OCI-LY7 (cell line): ENCODE measurements at regions of chr9 and their contacts with region 1.

Region 1: GRCh38 chr9:129383561-129384416 is 205.7 kb upstream of the IER5L start:
- DNase-seq: peak; percentile 83
- H3K4me3 ChIP-seq: peak overlapping the region; percentile 56
- H3K27ac ChIP-seq: no peak overlapping the region
- H3K4me1 ChIP-seq: peaks cover 21% of the 10 kb centered on the region
- CTCF ChIP-seq: peak; percentile 24

Region 2: DNA sequence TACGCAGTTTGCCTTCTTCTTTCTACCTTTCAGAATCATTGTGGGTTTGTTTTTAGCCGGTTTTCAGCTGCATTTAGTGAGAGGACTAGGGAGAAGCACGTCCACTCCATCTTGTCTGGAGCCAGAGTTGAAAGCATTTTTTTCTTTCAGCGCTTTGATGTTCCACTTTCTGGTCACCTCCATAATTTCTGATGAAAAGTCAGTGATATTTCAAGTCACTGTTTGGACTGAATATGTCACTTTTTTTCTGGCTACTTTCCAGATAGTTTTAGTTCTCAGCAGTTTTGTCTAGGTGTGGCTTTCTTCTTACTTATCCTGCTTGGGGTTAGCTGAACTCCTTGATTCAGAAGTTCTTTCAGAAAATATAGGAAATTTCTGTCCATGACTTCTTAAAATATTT is 81.8 kb before region 1 on chr9:
- CTCF ChIA-PET with region 1: no interaction called
- POLR2A ChIA-PET with region 1: no interaction called
- intact Hi-C with region 1: no loop called
- DNase-seq: no peak
- H3K4me3 ChIP-seq: no peak overlapping the region
- H3K27ac ChIP-seq: no peak overlapping the region
- H3K4me1 ChIP-seq: no peaks in the 10 kb centered on the region
- CTCF ChIP-seq: no peak

Region 3: GRCh38 chr9:129320575-129321263 is 63.1 kb before region 1 on chr9:
- CTCF ChIA-PET with region 1: no interaction called
- POLR2A ChIA-PET with region 1: no interaction called
- intact Hi-C with region 1: no loop called
- DNase-seq: no peak
- H3K4me3 ChIP-seq: no peak overlapping the region
- H3K27ac ChIP-seq: no peak overlapping the region
- H3K4me1 ChIP-seq: peaks cover 10% of the 10 kb centered on the region
- CTCF ChIP-seq: no peak

Region 4: GRCh38 chr9:129413537-129414376 is 30.0 kb after region 1 on chr9:
- CTCF ChIA-PET with region 1: no interaction called
- POLR2A ChIA-PET with region 1: no interaction called
- intact Hi-C with region 1: loop called (anchors 1 kb)
- DNase-seq: peak; percentile 98
- H3K4me3 ChIP-seq: peak overlapping the region; percentile 71
- H3K27ac ChIP-seq: peak overlapping the region; percentile 91
- H3K4me1 ChIP-seq: peaks cover 54% of the 10 kb centered on the region
- CTCF ChIP-seq: no peak

Region 5: DNA sequence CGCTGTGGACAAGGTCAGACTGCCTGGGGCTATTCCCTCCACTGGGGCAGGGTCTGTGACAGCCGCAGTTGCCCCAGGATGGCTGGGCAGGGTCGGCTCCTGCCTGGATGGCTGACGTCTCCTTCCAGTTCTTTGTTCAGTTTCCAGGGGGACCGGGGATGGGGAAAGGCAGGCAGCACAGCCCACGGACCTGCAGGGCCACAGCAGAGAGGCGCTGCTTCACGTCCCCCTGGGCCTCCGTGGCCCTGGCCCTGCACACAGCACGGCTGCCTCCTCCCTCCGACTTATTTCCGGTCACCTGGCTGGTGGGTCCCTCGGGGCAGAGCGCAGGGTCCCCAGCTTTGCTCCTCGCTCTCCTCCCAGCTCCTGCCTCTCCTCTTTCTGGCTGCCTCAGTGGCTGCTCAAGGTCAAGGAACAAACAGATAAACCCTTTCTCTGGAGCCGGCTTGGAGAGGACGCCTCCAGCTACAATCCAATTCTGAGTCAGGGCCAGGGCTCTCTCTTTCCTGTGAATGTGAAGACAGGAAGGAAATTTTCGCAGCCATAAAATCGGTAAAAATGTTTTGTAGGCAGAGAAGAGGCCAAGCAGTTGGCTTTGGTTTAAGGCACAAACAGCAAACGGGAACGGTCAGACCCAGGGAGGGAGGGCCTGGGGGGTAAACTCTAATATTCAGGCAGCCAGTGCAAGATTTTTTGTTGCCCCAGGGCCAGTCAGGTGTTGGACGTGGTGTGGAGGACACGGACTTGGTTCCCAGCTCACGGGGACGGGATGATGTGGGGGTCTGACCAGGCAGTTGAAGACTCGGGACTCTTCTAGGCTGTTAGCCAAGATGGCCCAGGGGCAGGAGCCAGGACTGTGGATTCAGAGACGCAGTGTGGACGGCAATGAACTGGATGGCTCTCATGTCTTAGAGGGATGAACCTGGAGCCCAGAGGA is 67.6 kb after region 1 on chr9:
- CTCF ChIA-PET with region 1: no interaction called
- POLR2A ChIA-PET with region 1: no interaction called
- intact Hi-C with region 1: no loop called
- DNase-seq: no peak
- H3K4me3 ChIP-seq: no peak overlapping the region
- H3K27ac ChIP-seq: no peak overlapping the region
- H3K4me1 ChIP-seq: peaks cover 6% of the 10 kb centered on the region
- CTCF ChIP-seq: no peak